ENCODE measurements at regions of chr13 and their contacts with region 1.

Region 1: DNA sequence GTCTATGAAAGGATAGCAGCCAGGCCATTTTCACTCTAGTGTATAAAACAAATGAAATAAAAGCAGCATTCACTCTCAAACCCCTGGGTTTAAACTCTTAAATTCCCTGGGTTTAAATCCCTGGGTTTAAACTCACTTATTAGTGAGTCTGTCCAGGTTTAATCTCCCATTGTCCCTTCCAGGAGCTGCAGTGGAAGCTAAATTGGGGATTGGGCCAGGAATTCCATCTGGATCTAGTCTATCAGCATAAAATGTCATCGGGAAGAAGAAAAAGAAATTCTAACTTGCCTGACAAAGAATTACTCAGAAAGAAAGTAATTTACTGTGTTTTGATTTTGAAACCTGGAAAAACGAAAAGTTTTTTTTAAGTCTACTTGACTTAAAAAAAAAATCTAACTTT is 54.8 kb downstream of the FRY start:
- DNase-seq: no peak
- ATAC-seq: peak in 1 of 4 donors; percentile 46
- H3K4me3 ChIP-seq: no peak overlapping the region
- H3K27ac ChIP-seq: peak overlapping the region in 7 of 12 donors; percentile 4 to 41 (median 17)
- H3K4me1 ChIP-seq: peaks cover 0 to 64% (median 18%) of the 10 kb centered on the region in 12 donors
- H3K27me3 ChIP-seq: no peaks in the 10 kb centered on the region
- CTCF ChIP-seq: no peak
- POLR2A ChIP-seq: no peak

Region 2: GRCh38 chr13:32135655-32136054 is 49.3 kb after region 1 on chr13:
- intact Hi-C with region 1: loop called in 1 of 10 experiments (anchors 10 kb)
- DNase-seq: no peak
- ATAC-seq: no peak
- H3K4me3 ChIP-seq: no peak overlapping the region
- H3K27ac ChIP-seq: peak overlapping the region in 8 of 12 donors; percentile 6 to 79 (median 49)
- H3K4me1 ChIP-seq: peaks cover 0 to 50% (median 20%) of the 10 kb centered on the region in 12 donors
- H3K27me3 ChIP-seq: no peaks in the 10 kb centered on the region
- CTCF ChIP-seq: no peak
- POLR2A ChIP-seq: no peak

Region 3: GRCh38 chr13:32381539-32381938 is 295.2 kb after region 1 on chr13:
- intact Hi-C with region 1: no loop called
- DNase-seq: no peak
- ATAC-seq: peak in 3 of 4 donors; percentile 54 to 62 (median 62)
- H3K4me3 ChIP-seq: no peak overlapping the region
- H3K27ac ChIP-seq: no peak overlapping the region
- H3K4me1 ChIP-seq: no peaks in the 10 kb centered on the region
- H3K27me3 ChIP-seq: no peaks in the 10 kb centered on the region
- CTCF ChIP-seq: peak; percentile 27 to 68 (median 57)
- POLR2A ChIP-seq: no peak